ENCODE measurements at regions of chr2 and their contacts with region 1.

Region 1: GRCh38 chr2:100580367-100581276 is 17.8 kb downstream of the PDCL3 start:
- DNase-seq: peak; percentile 80
- ATAC-seq: peak; percentile 88
- H3K4me3 Mint-ChIP-seq: peak overlapping the region; percentile 55
- H3K27ac Mint-ChIP-seq: peak overlapping the region; percentile 97
- H3K4me1 Mint-ChIP-seq: peaks cover 47% of the 10 kb centered on the region
- H3K27me3 Mint-ChIP-seq: no peaks in the 10 kb centered on the region

Region 2: GRCh38 chr2:100291120-100291970 is 289.3 kb before region 1 on chr2:
- CTCF ChIA-PET with region 1: no interaction called
- DNase-seq: peak; percentile 86
- ATAC-seq: peak; percentile 93
- H3K4me3 Mint-ChIP-seq: no peak overlapping the region
- H3K27ac Mint-ChIP-seq: no peak overlapping the region
- H3K4me1 Mint-ChIP-seq: peaks cover 11% of the 10 kb centered on the region
- H3K27me3 Mint-ChIP-seq: peaks cover 8% of the 10 kb centered on the region

Region 3: DNA sequence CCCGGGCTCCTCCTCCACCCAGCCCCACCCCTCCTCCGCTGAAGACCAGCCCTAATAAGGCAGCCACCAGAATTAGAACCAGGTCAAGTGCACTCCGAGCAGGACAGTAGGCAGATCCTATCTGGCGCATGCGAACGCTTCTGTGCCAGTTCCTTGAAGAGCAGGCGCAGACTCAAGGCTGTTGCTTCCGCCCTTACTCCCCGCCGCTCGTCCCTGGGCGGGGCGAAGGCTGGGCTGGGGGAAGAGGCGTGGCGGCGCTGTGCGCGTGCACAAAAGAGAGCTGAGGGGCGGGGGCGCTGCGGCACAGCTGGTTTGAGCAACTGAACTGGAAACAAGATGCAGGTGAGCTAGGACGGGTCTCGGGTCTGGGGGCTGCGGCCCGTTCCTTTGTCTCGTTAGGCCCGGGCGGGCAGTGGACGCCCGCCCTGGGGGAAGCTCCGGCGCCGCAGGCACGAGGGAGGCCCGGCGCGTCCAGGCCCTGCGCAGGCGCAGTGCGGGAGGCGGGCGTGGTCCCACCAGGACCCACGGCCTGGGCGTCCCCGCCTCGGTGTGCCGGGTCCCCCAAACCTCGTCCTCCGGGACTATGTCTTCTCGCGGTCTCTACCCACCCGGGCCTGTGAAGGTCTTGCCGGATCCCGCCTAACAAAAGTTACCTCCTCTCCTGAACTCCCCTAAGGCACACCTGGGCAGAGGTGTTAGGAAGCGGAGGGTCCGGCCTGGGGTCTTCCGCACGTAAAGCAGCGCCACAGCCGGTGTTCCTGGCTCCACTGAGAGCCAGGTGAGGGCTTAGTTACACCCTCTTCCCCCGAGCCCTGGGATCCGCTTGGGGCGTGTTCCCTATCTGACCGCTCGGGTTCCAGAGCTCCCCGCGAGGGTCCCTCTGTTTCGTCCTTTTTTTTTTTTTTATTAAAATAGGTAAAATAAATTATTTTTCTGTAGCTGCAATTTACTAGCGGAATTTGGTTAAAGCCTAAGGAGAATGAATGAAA is 17.6 kb before region 1 on chr2 and contains the start of gene PDCL3:
- CTCF ChIA-PET with region 1: interaction called, 23 read pairs
- DNase-seq: peak; percentile 97
- ATAC-seq: peak; percentile 92
- H3K4me3 Mint-ChIP-seq: peak within 1 kb of the TSS; percentile 83
- H3K27ac Mint-ChIP-seq: peak within 1 kb of the TSS; percentile 98
- H3K4me1 Mint-ChIP-seq: peaks cover 33% of the 10 kb centered on the region
- H3K27me3 Mint-ChIP-seq: no peaks in the 10 kb centered on the region
- total RNA-seq, gene PDCL3: 25.1 to 36.7 TPM

Region 4: DNA sequence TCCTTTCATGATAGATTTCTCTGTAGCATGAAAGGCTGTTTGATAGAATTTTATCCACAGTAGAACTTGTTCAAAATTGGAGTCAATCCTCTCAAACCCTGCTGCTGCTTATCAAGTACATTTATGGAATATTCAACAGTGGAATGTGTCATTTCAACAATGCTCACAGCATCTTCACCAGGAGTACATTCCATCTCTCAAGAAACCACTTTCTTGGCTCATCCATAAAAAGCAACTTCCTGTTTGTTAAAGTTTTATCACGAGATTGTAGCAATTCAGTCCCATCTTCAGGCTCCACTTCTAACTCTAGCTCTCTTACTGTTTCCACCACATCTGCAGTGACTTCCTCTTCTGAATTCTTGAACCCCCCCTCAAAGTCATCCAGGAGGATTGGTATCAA is 11.6 kb after region 1 on chr2:
- CTCF ChIA-PET with region 1: interaction called, 25 read pairs
- DNase-seq: no peak
- ATAC-seq: no peak
- H3K4me3 Mint-ChIP-seq: no peak overlapping the region
- H3K27ac Mint-ChIP-seq: no peak overlapping the region
- H3K4me1 Mint-ChIP-seq: peaks cover 33% of the 10 kb centered on the region
- H3K27me3 Mint-ChIP-seq: peaks cover 3% of the 10 kb centered on the region